Activated T-helper 1 cell treated with anti-CD3 and anti-CD28 coated beads, Interleukin-12 subunit alpha, Interleukin-12 subunit beta, Interleukin-2, Interleukin-4 antibody, amounts not matched to agents 30 ng/mL and 10 ng/mL and 1 ng/mL, durations not matched to agents 14 hours and 24 hours and 36 hours (primary cell): ENCODE measurements at regions of chr3 and their contacts with region 1.

Region 1: GRCh38 chr3:171459942-171460724 is at the start of gene TNIK:
- DNase-seq: peak; percentile 92
- H3K4me3 Mint-ChIP-seq: peak within 1 kb of the TSS; percentile 96
- H3K27ac Mint-ChIP-seq: peak within 1 kb of the TSS; percentile 91
- H3K4me1 Mint-ChIP-seq: peaks cover 55% of the 10 kb centered on the region
- H3K27me3 Mint-ChIP-seq: no peaks in the 10 kb centered on the region
- total RNA-seq, gene TNIK: 21.0 and 21.5 TPM in 2 replicates

Region 2: GRCh38 chr3:170961616-170962400 is 498.3 kb before region 1 on chr3:
- intact Hi-C with region 1: loop called (anchors 10 kb)
- DNase-seq: no peak
- H3K4me3 Mint-ChIP-seq: no peak overlapping the region
- H3K27ac Mint-ChIP-seq: no peak overlapping the region
- H3K4me1 Mint-ChIP-seq: no peaks in the 10 kb centered on the region
- H3K27me3 Mint-ChIP-seq: peaks cover 13% of the 10 kb centered on the region

Region 3: DNA sequence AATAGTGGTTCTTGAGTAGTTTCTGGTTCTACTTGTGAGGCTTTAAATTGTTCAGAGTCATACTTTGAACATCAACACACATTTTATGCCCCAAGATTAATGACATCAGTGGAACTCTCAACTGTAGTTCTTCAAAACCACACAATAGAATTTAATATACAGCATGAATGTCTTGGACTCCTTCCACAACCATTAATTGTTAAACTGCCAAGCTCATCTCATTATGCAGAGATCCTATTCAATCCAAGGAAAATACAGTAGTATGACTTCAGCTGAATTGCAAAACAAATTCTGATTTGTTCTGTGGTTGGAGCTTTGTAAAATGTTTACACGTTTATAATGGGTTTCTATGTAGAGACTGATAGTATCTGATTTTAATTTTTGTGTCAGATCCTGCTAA is 234.4 kb before region 1 on chr3:
- intact Hi-C with region 1: loop called (anchors 1 kb)
- DNase-seq: no peak
- H3K4me3 Mint-ChIP-seq: no peak overlapping the region
- H3K27ac Mint-ChIP-seq: no peak overlapping the region
- H3K4me1 Mint-ChIP-seq: peaks cover 58% of the 10 kb centered on the region
- H3K27me3 Mint-ChIP-seq: no peaks in the 10 kb centered on the region

Region 4: GRCh38 chr3:171480526-171480925 is 20.4 kb after region 1 on chr3:
- intact Hi-C with region 1: loop called (anchors 1 kb)
- DNase-seq: peak; percentile 30
- H3K4me3 Mint-ChIP-seq: peak overlapping the region; percentile 2
- H3K27ac Mint-ChIP-seq: peak overlapping the region; percentile 76
- H3K4me1 Mint-ChIP-seq: peaks cover 14% of the 10 kb centered on the region
- H3K27me3 Mint-ChIP-seq: no peaks in the 10 kb centered on the region

Region 5: GRCh38 chr3:171566803-171567422 is 106.8 kb after region 1 on chr3:
- intact Hi-C with region 1: loop called (anchors 1 kb)
- DNase-seq: no peak
- H3K4me3 Mint-ChIP-seq: no peak overlapping the region
- H3K27ac Mint-ChIP-seq: no peak overlapping the region
- H3K4me1 Mint-ChIP-seq: peaks cover 30% of the 10 kb centered on the region
- H3K27me3 Mint-ChIP-seq: peaks cover 12% of the 10 kb centered on the region